Naive thymus-derived CD4-positive, alpha-beta T cell (primary cell): ENCODE measurements at regions of chr6 and their contacts with region 1.

Region 1: DNA sequence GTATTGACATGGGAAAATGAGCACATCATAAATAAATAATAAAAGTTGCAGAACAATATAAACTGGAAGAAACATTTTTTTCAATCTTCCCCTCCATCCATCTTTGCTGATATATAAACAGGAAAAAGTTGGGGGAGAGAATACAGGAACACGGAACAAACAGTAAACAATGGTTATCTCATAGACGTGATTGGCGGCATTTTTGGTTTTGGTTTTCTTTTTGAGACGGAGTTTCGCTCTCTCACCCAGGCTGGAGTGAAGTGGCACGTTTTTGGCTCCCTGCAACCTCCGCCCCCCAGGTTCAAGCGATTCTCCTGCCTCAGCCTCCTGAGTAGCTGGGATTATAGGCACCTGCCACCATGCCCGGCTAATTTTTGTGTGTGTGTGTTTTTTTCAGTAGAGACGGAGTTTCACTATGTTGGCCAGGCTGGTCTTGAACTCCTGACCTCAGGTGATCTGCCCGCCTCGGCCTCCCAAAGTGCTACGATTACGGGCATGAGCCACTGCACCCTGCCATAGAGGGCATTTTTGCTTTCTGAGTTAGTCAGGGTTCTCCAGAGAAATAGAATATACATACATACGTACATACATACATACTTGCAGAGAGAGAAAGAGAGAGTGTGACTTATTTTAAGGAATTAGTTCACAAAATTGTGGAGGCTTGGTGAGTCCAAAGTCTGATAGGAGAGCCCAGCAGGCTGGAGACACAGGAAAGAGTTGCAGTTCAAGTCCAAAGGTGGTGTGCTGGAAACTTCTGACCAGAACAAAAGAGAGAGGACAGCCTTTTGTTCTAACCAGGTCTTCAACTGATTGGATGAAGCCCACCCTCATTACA is 22.6 kb downstream of the GNL1 start:
- DNase-seq: no peak
- ATAC-seq: peak; percentile 29
- H3K4me3 ChIP-seq: no peak overlapping the region
- H3K4me3 Mint-ChIP-seq: peak overlapping the region in 8 of 10 donors; percentile 49 to 91 (median 64)
- H3K27ac ChIP-seq: no peak overlapping the region
- H3K27ac Mint-ChIP-seq: peak overlapping the region in 7 of 9 donors; percentile 53 to 91 (median 81)
- H3K4me1 ChIP-seq: peaks cover 19 to 24% of the 10 kb centered on the region in 2 donors
- H3K4me1 Mint-ChIP-seq: peaks cover 16 to 41% (median 32%) of the 10 kb centered on the region in 7 donors
- H3K27me3 ChIP-seq: no peaks in the 10 kb centered on the region
- H3K27me3 Mint-ChIP-seq: peaks cover 0 to 3% (median 0%) of the 10 kb centered on the region in 5 donors

Region 2: DNA sequence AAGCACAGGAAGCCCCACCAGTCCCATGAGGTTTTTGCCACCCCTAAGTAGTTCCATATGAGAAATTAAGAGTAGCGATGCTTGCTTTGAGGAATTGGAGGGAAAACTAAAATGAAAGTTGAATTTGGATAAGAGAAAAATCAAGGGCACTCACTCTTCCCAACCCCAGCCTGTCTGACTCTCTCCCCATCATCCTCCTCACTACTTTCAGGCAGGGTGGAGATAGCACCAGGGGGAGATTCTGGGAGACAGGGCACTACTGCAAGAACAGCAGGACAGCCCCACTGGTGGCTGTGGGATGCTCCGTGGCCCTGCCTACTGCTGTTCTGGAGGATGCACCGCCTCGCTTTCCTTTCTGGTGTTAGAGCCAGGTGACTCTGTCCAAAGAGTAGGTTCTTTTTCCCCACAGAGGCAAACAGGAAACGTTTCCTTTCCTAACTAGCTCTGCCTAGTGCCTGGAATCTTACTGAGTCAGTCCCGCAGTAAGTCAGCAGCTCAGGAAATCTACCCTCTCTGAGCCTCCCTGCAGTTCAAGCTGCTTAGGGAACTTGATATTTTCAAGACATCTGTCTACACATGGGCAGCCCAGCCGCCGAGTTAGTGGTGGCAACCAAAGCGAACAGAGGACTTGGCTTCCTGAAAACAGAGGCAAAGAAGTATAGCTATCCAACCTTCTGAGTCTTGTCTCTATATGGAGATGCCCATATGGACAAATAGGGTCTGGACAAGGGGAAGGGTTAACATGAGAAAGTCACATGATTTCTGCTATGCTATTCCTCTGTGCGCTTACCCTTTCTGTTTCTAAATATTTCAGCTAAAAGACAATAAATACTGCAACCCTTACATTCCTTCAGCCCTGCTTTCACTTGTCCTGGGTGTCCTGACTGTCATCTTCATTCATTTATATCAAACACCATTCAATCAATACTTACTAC is 33.0 kb before region 1 on chr6:
- CTCF ChIA-PET with region 1: interaction called, 96 read pairs
- POLR2A ChIA-PET with region 1: interaction called, 199 read pairs
- intact Hi-C with region 1: no loop called
- DNase-seq: no peak
- ATAC-seq: peak; percentile 35
- H3K4me3 ChIP-seq: peak overlapping the region; percentile 48
- H3K4me3 Mint-ChIP-seq: peak overlapping the region; percentile 76 to 89 (median 86)
- H3K27ac ChIP-seq: peak overlapping the region; percentile 36
- H3K27ac Mint-ChIP-seq: peak overlapping the region; percentile 39 to 93 (median 85)
- H3K4me1 ChIP-seq: peaks cover 9 to 31% of the 10 kb centered on the region in 2 donors
- H3K4me1 Mint-ChIP-seq: peaks cover 24 to 50% (median 46%) of the 10 kb centered on the region in 7 donors
- H3K27me3 ChIP-seq: no peaks in the 10 kb centered on the region
- H3K27me3 Mint-ChIP-seq: no peaks in the 10 kb centered on the region

Region 3: DNA sequence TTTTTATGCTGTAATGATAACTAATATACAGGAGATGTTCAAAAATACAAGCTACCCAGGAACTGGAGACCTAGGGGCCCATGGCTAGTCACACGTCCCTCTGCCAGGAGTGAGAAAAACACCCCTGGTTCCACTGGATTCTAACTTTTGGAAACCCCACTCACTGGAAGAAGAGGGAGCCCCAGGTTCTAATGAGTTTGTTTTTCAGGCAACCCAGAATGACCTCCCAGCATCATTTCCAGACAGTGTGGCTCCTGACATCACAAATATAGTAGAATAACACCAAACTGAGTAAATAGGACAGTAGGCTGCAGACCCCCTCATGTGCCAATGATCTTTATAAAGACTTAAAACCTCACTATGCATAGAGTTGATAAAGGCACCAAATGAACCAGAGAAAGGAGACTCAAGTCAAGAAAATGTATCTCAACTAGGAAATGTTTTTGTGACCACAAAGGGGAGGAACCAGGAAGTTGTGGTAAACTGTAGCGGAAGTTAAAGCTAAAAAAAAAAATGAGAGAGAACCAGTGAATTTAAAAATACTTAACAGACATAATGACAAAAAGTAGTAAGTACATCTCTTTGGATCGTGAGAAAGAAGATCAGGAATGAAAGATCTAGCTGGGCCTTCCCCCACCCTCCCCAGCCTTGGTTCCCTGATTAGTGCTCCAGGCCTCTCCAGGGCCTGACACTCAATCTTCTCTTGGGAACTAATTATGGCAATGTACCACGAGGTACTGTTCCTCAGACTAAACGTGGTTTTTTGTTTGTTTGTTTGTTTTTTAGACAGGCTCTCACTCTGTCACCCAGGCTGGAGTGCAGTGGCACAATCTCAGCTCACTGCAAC is 24.6 kb before region 1 on chr6:
- CTCF ChIA-PET with region 1: interaction called, 21 read pairs
- POLR2A ChIA-PET with region 1: interaction called, 65 read pairs
- intact Hi-C with region 1: loop called in 1 of 2 experiments (anchors 1 kb)
- DNase-seq: peak in 7 of 9 donors; percentile 72 to 88 (median 86)
- ATAC-seq: peak; percentile 90
- H3K4me3 ChIP-seq: peak overlapping the region; percentile 55
- H3K4me3 Mint-ChIP-seq: peak overlapping the region; percentile 60 to 89 (median 80)
- H3K27ac ChIP-seq: peak overlapping the region; percentile 43
- H3K27ac Mint-ChIP-seq: peak overlapping the region; percentile 73 to 97 (median 85)
- H3K4me1 ChIP-seq: peaks cover 44 to 73% of the 10 kb centered on the region in 2 donors
- H3K4me1 Mint-ChIP-seq: peaks cover 38 to 78% (median 59%) of the 10 kb centered on the region in 7 donors
- H3K27me3 ChIP-seq: no peaks in the 10 kb centered on the region
- H3K27me3 Mint-ChIP-seq: no peaks in the 10 kb centered on the region

Region 4: GRCh38 chr6:30515932-30516753 is 17.5 kb before region 1 on chr6:
- CTCF ChIA-PET with region 1: interaction called, 21 read pairs
- POLR2A ChIA-PET with region 1: interaction called, 65 read pairs
- intact Hi-C with region 1: loop called (anchors 1 kb)
- DNase-seq: peak; percentile 60 to 97 (median 95)
- ATAC-seq: peak; percentile 93
- H3K4me3 ChIP-seq: peak overlapping the region; percentile 64
- H3K4me3 Mint-ChIP-seq: peak overlapping the region; percentile 82 to 96 (median 89)
- H3K27ac ChIP-seq: peak overlapping the region; percentile 82
- H3K27ac Mint-ChIP-seq: peak overlapping the region; percentile 97 to 100 (median 99)
- H3K4me1 ChIP-seq: peaks cover 20 to 62% of the 10 kb centered on the region in 2 donors
- H3K4me1 Mint-ChIP-seq: peaks cover 31 to 91% (median 62%) of the 10 kb centered on the region in 7 donors
- H3K27me3 ChIP-seq: no peaks in the 10 kb centered on the region
- H3K27me3 Mint-ChIP-seq: no peaks in the 10 kb centered on the region

Region 5: DNA sequence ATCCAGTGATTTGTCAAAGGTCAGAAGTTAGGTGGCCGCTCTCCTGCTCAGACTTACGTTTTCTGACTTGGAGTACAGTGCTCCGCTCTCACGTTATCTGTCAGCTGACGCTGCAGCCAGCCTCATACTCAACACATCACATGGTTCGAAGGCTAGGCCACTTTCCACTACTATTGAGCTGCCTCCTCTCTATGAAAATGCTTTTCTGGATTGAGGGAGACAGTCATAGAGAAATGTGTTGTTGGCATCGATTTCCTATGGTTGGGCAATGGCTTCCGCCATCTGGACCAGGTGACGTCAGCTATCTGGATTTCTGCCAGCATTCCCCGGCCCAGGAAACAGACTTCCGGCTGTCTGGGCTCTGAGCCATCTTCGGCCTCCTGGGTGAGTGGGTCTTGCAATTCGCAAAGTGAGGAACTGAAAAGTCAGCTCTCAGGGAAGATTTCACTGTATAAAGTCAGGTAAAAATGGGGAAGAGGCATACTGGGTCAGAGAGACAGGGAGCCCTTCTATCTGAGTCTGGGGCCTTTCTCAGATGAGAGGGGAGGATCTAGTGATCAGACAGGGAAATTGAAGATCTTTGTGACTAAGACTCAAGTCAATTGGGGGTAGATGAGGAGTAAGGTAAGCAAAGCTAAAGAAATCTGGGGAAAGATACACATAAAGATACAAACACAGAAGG is 248.2 kb after region 1 on chr6:
- CTCF ChIA-PET with region 1: no interaction called
- POLR2A ChIA-PET with region 1: no interaction called
- intact Hi-C with region 1: no loop called
- DNase-seq: peak in 2 of 9 donors; percentile 11 to 41
- ATAC-seq: peak; percentile 79
- H3K4me3 ChIP-seq: no peak overlapping the region
- H3K4me3 Mint-ChIP-seq: peak overlapping the region; percentile 28 to 79 (median 53)
- H3K27ac ChIP-seq: peak overlapping the region; percentile 26
- H3K27ac Mint-ChIP-seq: peak overlapping the region; percentile 23 to 83 (median 62)
- H3K4me1 ChIP-seq: peaks cover 0 to 24% of the 10 kb centered on the region in 2 donors
- H3K4me1 Mint-ChIP-seq: peaks cover 36 to 73% (median 70%) of the 10 kb centered on the region in 7 donors
- H3K27me3 ChIP-seq: no peaks in the 10 kb centered on the region
- H3K27me3 Mint-ChIP-seq: peaks cover 0 to 4% (median 0%) of the 10 kb centered on the region in 5 donors

Region 6: GRCh38 chr6:30793521-30794194 is 260.0 kb after region 1 on chr6:
- CTCF ChIA-PET with region 1: no interaction called
- POLR2A ChIA-PET with region 1: no interaction called
- intact Hi-C with region 1: no loop called
- DNase-seq: peak in 7 of 9 donors; percentile 22 to 69 (median 57)
- ATAC-seq: peak; percentile 94
- H3K4me3 ChIP-seq: peak overlapping the region; percentile 12
- H3K4me3 Mint-ChIP-seq: peak overlapping the region; percentile 64 to 85 (median 78)
- H3K27ac ChIP-seq: peak overlapping the region; percentile 71
- H3K27ac Mint-ChIP-seq: peak overlapping the region; percentile 90 to 99 (median 96)
- H3K4me1 ChIP-seq: peaks cover 16 to 27% of the 10 kb centered on the region in 2 donors
- H3K4me1 Mint-ChIP-seq: peaks cover 29 to 72% (median 58%) of the 10 kb centered on the region in 7 donors
- H3K27me3 ChIP-seq: no peaks in the 10 kb centered on the region
- H3K27me3 Mint-ChIP-seq: no peaks in the 10 kb centered on the region